PC-3 (cell line): ENCODE measurements at regions of chr1 and their contacts with region 1.

Region 1: DNA sequence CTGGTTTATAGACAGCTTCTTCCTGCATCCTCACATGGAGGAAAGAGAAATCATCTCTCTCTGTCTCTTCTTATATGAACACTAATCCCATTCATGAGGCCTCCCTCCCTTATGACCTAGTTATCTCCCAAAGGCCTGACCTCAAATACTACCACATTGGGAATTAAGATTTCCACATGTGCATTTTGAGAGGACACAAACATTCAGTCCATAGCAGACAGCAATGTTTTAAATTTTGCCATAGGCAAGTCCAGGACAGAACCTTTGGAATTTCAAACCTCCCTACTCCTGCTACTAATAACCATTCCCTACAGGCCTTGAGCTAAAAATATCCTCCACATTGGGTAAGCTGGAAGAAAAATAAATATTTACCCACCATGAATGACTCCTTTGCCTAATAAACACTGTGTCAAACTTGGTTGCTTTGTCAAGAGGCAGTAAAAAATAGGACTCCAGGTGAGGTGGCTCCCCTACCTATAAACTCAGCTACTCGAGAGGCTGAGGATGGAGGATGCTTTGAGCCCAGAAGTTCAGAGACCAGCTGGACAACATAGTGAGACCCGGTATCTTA is 113.7 kb downstream of the ZNF281 start:
- DNase-seq: peak; percentile 90
- ATAC-seq: peak; percentile 95
- H3K4me3 ChIP-seq: no peak overlapping the region
- H3K27ac ChIP-seq: peak overlapping the region; percentile 53
- H3K4me1 ChIP-seq: peaks cover 20% of the 10 kb centered on the region
- H3K27me3 ChIP-seq: no peaks in the 10 kb centered on the region
- CTCF ChIP-seq: no peak

Region 2: GRCh38 chr1:200336111-200336845 is 40.1 kb after region 1 on chr1:
- CTCF ChIA-PET with region 1: no interaction called
- POLR2A ChIA-PET with region 1: no interaction called
- intact Hi-C with region 1: loop called (anchors 1 kb)
- DNase-seq: peak; percentile 98
- ATAC-seq: peak; percentile 82
- H3K4me3 ChIP-seq: no peak overlapping the region; the same call in 1 of the 2 replicates
- H3K27ac ChIP-seq: peak overlapping the region; percentile 39
- H3K4me1 ChIP-seq: peaks cover 34% of the 10 kb centered on the region
- H3K27me3 ChIP-seq: no peaks in the 10 kb centered on the region
- CTCF ChIP-seq: no peak